ENCODE measurements at regions of chrX and their contacts with region 1.

Region 1: GRCh38 chrX:154019633-154020528 is at the start of gene IRAK1:
- DNase-seq: no peak
- H3K4me3 ChIP-seq: peak within 1 kb of the TSS; percentile 54 to 84
- H3K27ac ChIP-seq: peak within 1 kb of the TSS; percentile 81 to 92
- H3K4me1 ChIP-seq: no peaks in the 10 kb centered on the region
- H3K27me3 ChIP-seq: no peaks in the 10 kb centered on the region
- CTCF ChIP-seq: no peak
- total RNA-seq, gene IRAK1: 105 TPM

Region 2: DNA sequence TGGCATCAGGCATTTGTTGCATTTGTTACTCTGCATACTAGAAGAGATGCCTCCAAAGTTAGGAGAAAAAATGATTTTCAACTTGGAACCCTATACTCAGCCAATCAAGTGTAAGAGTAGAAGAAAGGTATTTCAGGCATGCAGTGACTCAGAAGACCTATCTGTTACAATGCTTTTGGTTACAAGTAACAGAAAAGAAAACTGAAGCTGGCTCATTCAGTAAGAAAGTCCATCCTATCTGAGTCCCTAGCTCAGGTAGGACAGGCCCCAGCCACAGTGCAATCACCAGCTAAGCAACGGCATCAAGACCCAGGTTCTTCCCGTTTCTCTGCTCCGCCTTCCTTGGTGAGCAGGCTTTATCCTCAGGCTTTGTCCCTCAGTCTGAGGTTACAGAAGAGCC is 54.3 kb after region 1 on chrX:
- intact Hi-C with region 1: no loop called
- DNase-seq: peak in 1 of 2 donors; percentile 16
- H3K4me3 ChIP-seq: no peak overlapping the region
- H3K27ac ChIP-seq: no peak overlapping the region
- H3K4me1 ChIP-seq: peaks cover 0 to 9% of the 10 kb centered on the region in 2 donors
- H3K27me3 ChIP-seq: no peaks in the 10 kb centered on the region
- CTCF ChIP-seq: no peak

Region 3: DNA sequence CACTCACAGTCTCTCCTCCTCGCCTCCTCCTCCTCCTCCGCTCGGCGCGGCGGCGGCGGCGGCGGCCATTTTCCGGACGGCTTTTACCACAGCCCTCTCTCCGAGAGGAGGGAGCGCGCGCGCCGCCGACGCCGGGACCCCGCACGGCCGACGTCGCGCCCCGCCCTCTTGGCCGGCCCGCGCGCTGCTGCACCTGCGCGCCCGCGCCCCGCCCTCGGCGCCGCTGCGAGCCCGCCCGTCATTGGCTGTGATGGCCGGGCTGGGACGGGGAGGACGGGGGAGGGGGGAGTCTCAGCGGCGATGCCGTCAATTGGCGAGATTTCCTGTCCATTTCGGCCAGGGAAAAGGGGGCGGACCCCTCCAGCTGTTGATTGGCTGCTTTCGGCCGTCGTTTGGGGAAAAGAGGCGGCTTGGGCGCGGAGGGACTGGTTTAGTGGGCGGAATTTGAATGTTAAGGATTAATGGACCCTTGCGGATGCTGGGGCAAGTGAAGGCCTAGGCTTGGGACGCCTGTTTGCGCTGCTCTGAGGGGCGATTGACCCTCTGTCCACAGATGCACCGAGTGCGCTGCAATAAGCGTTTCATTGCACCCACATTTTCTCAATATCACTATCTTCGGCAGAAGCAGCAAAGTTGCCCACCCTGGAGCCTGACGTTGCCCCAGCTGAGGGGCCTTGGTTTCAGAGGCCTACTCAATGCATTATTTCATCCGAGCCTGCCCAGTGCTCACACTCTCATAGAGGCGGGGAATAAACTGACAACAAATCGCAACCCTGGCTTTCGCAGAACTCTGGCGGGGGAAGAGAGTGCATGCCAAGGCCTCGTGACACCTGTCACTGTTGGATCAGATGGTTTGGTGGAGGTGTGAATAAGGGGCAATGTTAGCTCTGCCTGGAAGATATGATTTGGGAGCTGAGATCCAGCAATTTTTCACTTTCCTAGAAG is 78.0 kb after region 1 on chrX and contains the start of gene MECP2:
- intact Hi-C with region 1: loop called (anchors 2 kb)
- DNase-seq: peak; percentile 71 to 94
- H3K4me3 ChIP-seq: peak within 1 kb of the TSS; percentile 66 to 94
- H3K27ac ChIP-seq: peak within 1 kb of the TSS; percentile 98 to 99
- H3K4me1 ChIP-seq: peaks cover 0 to 9% of the 10 kb centered on the region in 2 donors
- H3K27me3 ChIP-seq: no peaks in the 10 kb centered on the region
- CTCF ChIP-seq: no peak
- total RNA-seq, gene MECP2: 65.7 TPM

Measured in ascending aorta (tissue), 2 donors.